ENCODE measurements at regions of chr11 and their contacts with region 1.

Region 1: DNA sequence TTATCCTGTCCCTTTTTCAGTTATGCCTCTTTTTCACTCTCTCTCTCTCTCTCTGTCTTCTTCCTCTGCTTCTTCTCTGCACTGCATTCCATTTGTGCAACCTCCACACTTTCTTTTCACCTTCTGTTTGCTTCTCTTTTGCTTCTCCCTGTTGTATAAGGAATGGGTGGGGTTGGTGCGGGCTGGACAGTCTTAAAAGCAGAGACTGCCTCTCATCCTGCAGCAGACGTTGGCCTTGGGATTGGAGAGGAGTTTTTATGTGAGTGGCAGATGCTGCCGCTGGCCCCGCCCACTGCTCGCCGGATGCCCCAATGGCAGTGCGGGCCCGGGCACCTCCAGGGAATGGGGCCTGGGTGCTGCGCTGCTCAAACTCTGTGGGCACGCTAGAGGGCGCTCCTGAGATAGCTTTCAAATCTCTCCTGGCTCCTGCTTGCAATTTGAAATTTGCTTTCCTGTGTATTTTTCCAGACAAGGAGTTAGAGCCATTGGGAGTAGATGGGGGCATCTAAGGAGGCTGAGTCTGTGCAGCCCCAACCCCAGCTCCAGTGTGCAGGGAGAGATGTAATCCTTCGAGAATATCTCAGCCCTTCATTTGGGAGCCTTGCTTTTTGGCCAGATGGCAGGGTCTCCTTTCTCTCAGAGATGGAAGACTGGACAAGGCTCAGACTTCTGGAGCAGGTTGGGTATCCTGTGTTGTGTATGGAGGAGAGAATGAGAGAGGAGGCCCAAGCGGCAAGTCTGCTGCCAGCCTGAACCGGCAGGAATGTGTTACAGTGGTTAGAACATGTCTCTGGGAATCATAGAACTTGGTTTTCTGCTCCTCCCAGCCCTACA is 81.2 kb downstream of the GRAMD1B start:
- DNase-seq: peak; percentile 78 to 87
- ATAC-seq: peak; percentile 82 to 94 (median 93)
- H3K4me3 ChIP-seq: no peak overlapping the region
- H3K27ac ChIP-seq: no peak overlapping the region
- H3K4me1 ChIP-seq: no peaks in the 10 kb centered on the region
- H3K27me3 ChIP-seq: no peaks in the 10 kb centered on the region
- CTCF ChIP-seq: peak; percentile 76

Region 2: GRCh38 chr11:123525511-123525918 is 14.3 kb after region 1 on chr11:
- intact Hi-C with region 1: no loop called
- DNase-seq: no peak
- ATAC-seq: no peak
- H3K4me3 ChIP-seq: no peak overlapping the region
- H3K27ac ChIP-seq: no peak overlapping the region
- H3K4me1 ChIP-seq: no peaks in the 10 kb centered on the region
- H3K27me3 ChIP-seq: peaks cover 0 to 4% (median 3%) of the 10 kb centered on the region in 3 donors
- CTCF ChIP-seq: no peak

Region 3: DNA sequence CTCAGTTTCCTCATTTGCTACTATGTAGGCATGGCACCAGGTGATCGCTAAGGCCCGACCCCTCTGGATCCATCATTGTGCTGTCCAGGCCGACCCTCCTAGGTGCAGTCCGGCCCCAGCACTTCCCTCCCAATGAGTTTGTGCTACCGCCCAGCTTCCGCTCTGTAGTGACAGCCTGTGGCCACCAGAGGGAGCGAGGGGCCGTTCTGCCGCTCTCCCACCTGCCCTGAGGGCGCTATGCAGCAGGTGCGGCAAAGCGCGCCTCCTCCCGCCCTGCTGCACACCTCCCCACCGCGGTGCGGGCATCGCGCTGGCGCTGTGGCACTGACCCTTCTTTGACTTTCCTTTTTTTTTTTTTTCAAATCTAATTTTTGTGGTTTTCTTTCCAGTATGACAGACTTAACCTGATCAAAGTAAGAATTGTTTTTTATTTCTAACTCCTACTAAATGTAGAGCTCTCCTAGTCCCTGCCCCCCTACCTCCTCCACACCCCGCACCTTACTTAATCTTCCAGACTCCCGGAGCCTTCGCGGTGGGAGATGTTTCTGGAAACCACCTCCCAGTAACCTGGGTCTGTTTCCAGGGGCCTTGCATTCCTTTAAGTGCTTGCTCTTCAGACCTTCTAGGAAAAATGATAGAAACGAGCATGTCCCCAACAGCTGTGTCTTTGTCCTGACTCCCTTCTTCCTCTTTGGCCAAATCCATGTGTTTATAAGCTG is 69.5 kb after region 1 on chr11:
- intact Hi-C with region 1: loop called (anchors 2 to 5 kb)
- DNase-seq: peak; percentile 49 to 75
- ATAC-seq: peak; percentile 80 to 88 (median 86)
- H3K4me3 ChIP-seq: no peak overlapping the region
- H3K27ac ChIP-seq: no peak overlapping the region
- H3K4me1 ChIP-seq: no peaks in the 10 kb centered on the region
- H3K27me3 ChIP-seq: peaks cover 0 to 12% (median 0%) of the 10 kb centered on the region in 3 donors
- CTCF ChIP-seq: peak; percentile 91

Measured in psoas muscle (tissue), 8 donors.